BJ (cell line): ENCODE measurements at regions of chr5 and their contacts with region 1.

Region 1: DNA sequence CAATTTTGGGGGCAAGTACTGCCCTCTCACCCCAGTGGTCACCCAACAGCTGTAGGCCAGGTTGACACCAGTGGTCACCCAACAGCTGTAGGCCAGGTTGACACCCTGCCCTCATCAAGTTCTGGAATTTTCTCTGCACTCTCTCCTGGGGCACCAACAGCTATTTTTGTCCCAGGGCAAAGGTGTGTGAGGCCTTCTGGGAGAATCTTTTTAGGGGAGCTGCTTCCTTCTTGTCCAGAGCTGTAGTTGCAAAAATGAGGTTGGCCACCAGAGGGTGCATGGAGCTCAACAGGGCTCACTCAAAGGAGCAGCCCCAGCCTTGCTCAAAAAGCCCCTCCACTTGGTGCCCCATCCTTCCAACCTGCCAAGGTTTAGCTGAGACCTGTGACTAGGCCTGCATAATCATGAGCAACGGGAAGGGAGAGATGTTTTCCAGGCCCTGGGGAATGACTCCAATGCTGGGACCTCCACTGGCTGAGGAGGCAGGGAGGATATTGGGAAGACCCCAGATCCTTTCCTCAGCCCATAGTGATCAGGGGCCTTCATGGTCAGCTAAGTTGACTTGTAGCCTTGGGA is 10.6 kb upstream of the P4HA2 start:
- DNase-seq: no peak
- H3K4me3 ChIP-seq: no peak overlapping the region
- H3K27me3 ChIP-seq: no peaks in the 10 kb centered on the region
- CTCF ChIP-seq: peak; percentile 90

Region 2: GRCh38 chr5:132215329-132215728 is 22.9 kb before region 1 on chr5:
- CTCF ChIA-PET with region 1: interaction called, 12 read pairs
- POLR2A ChIA-PET with region 1: no interaction called
- DNase-seq: peak; percentile 90
- H3K4me3 ChIP-seq: no peak overlapping the region
- H3K27me3 ChIP-seq: no peaks in the 10 kb centered on the region
- CTCF ChIP-seq: no peak

Region 3: DNA sequence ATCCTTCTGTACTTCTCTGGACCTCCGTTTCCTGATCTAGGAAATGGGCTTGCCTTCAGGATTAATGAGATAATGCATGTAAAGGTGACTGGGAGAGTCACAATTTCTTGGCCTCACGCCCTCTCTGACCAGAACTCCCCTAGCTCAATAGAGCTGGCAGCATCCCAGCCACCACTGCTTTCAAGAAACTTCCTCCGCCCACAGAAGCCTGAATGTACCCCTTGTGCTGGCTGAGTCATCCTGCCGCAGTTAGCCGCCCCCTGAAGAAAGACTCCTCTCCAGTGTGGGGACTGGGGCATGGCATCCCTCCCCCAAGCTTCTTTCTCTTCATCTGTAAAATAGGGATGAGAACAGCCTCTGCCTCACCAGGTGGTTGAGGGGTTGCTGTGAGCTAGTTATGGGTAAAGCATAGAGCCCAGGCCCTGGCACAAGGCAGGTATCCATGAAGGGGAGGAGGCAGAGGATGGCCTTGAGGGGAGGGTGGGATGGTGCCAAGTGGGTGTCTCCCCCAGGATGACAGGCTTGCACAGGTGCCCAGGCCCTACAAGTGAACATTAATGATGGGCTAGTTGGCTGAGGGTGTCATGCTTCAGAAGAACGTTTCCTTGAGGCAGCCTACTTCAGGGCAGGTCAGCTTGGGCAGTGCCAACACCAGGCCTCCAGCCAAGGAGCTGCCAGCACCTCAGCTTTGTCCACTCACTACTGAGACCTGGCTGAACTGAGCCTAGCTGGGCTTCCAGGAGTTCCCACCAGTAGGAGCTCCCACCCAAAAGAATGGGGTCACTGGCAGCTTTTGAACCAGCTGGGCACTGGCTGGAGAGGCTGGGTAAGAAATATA is 22.7 kb after region 1 on chr5:
- CTCF ChIA-PET with region 1: interaction called, 71 read pairs
- POLR2A ChIA-PET with region 1: no interaction called
- DNase-seq: peak; percentile 46
- H3K4me3 ChIP-seq: no peak overlapping the region
- H3K27me3 ChIP-seq: no peaks in the 10 kb centered on the region
- CTCF ChIP-seq: no peak

Region 4: DNA sequence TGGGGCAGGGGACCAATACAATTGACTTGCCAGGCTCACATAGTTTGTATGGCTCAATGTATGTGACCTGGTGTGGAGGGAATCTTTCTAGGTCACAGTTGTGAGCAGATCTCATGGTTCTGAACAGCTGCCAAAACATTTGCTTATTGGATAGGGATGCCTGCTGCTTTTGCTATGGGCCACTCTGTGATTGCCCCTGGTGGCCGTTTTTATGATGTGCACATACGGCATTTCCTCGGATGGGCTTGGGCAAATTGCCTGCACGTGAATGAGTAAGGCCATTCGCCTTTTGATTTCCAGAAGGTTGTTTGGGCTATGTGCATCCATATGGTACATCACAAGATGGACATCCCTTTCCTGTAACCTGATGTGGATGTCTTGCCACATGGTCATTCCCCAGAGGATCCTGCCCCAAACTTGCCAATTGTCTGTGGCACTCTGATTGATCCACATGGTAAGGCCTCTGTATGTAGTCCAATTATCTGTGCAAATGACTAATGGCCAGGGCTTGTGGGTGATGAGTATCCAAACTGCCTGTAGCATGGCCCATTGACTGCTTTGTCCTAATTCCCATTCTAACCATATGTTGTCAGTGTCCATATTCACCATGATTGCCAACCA is 45.3 kb after region 1 on chr5:
- CTCF ChIA-PET with region 1: interaction called, 11 read pairs
- POLR2A ChIA-PET with region 1: no interaction called
- DNase-seq: no peak
- H3K4me3 ChIP-seq: no peak overlapping the region
- H3K27me3 ChIP-seq: no peaks in the 10 kb centered on the region; the same call in 1 of the 2 replicates
- CTCF ChIP-seq: peak; percentile 56

Region 5: GRCh38 chr5:132315529-132316083 is 77.3 kb after region 1 on chr5:
- CTCF ChIA-PET with region 1: interaction called, 19 read pairs
- POLR2A ChIA-PET with region 1: no interaction called
- DNase-seq: no peak
- H3K4me3 ChIP-seq: no peak overlapping the region
- H3K27me3 ChIP-seq: no peaks in the 10 kb centered on the region
- CTCF ChIP-seq: no peak